Ascending aorta (tissue), 2 donors: ENCODE measurements at regions of chr1 and their contacts with region 1.

Region 1: DNA sequence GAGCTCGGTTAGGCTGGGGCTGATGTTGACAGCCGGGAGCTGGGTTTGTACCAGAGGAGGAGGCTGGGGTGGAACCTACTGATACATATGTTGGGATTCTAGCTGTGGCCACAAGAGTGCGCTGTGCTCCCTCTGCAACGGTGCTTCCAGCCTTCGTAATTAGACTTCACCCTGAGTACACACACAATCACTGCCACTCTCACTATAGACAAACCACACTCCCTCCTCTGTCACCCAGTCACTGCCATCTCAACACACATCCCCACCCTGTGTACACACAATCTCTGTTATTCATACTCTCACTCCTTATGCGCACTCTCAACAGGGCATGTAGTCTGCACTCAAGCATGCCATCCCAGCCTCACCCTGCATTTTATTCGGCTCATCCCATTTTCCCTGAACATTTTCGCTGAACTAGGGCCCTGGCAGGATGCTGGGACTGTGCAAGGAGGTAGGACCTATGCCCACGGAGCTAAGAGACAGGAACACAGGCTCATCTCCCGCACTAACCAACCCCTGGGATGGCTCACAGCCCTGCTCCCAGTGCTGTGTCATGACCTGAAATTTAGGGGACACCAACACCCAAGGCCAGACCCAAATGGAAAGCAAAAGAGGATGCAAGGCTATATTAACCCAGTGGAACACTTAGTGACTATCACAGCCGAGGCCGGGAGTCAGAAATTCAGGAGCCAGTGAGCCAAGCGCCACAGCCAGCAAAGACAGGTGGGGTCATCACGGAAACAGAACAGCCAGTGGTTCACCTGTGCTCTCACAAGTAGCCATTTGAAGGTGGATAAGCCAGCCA is 5.7 kb downstream of the GJB3 start:
- DNase-seq: peak in 1 of 2 donors; percentile 81
- H3K4me3 ChIP-seq: no peak overlapping the region
- H3K27ac ChIP-seq: peak overlapping the region; percentile 48 to 50
- H3K4me1 ChIP-seq: peaks cover 3 to 13% of the 10 kb centered on the region in 2 donors
- H3K27me3 ChIP-seq: peaks cover under 1% of the 10 kb centered on the region
- CTCF ChIP-seq: peak; percentile 85 to 86 (median 85)

Region 2: DNA sequence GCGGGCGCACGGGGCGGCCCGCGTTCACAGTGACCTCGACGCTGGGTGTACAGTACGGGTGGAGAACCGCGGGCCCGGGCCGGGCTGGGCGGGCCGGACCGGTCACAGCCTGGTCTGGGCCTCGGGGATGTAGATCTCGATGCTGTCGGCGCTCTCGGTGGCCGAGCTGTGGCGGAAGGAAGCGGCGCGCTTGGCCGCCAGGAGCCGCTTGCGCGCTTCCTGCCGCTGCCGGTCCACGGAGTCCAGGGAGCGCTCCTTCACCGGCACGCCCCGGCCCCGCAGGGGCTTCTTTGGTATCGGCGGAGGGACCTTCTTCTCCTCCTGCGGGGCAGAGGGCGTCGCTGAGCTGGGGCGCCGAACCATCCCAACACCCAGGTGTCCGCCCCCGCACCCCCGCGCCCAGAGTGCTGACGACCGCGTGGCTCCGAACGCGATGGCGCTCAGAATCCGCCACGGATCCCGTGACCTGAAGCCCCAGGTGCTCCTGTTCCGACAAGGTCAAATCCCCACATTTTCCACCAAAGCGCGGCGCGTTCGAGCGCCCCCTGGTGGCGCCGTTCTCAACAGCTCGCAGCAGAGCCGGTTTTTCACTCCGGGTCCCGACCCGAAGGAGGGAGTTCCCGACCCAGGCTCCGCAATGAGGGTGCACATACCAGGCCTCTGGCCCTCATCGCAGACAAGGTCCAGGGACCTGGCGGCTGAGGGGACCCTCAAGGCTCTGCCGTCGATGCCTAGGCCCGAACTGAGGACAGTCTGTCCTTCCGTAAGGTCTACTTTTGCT is 79.4 kb after region 1 on chr1:
- intact Hi-C with region 1: loop called (anchors 1 kb)
- DNase-seq: peak; percentile 25 to 91
- H3K4me3 ChIP-seq: peak overlapping the region; percentile 71 to 76
- H3K27ac ChIP-seq: peak overlapping the region; percentile 54 to 74
- H3K4me1 ChIP-seq: peaks cover 3 to 8% of the 10 kb centered on the region in 2 donors
- H3K27me3 ChIP-seq: no peaks in the 10 kb centered on the region
- CTCF ChIP-seq: peak; percentile 94 to 96 (median 96)